ENCODE measurements at regions of chr4 and their contacts with region 1.

Region 1: GRCh38 chr4:75724066-75724866 is at the start of gene USO1:
- DNase-seq: peak; percentile 99
- H3K4me3 Mint-ChIP-seq: peak within 1 kb of the TSS; percentile 98
- H3K27ac Mint-ChIP-seq: peak within 1 kb of the TSS; percentile 99
- H3K4me1 Mint-ChIP-seq: peaks cover 55% of the 10 kb centered on the region
- H3K27me3 Mint-ChIP-seq: peaks cover 5% of the 10 kb centered on the region

Region 2: DNA sequence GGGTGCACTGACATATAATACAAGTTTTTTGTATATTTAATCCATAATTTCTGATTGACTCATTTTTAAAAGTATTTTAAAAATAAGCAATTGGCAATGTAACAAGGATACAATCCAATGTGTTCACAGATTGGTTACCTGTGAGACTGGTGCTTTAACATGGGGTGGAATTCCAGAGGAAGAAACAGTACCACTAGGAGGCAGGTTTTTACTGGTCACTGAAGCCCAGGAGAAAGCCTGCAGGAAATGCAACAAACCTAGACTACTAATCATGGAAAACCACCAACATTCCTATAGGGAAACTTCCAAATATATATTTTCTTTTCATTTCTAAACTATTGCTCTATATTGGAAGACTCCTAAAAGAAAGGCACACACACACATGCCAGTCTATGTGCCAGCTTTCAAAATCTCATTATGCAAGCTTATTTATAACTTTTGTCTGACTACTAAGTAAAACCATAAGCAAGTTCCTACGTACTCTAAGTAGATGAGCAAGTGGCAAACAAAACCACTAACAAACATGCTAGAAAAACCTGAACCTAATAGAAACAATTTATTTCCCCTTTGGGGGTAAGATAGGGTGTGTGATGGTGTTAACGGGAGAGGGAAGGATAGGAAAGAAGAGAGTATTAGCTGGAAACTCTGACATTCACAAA is 70.3 kb before region 1 on chr4:
- CTCF ChIA-PET with region 1: interaction called, 16 read pairs
- DNase-seq: no peak
- H3K4me3 Mint-ChIP-seq: peak overlapping the region; percentile 32
- H3K27ac Mint-ChIP-seq: peak overlapping the region; percentile 98
- H3K4me1 Mint-ChIP-seq: peaks cover 65% of the 10 kb centered on the region
- H3K27me3 Mint-ChIP-seq: no peaks in the 10 kb centered on the region

Region 3: GRCh38 chr4:75672461-75673026 is 51.7 kb before region 1 on chr4:
- CTCF ChIA-PET with region 1: interaction called, 13 read pairs
- DNase-seq: peak; percentile 89
- H3K4me3 Mint-ChIP-seq: peak overlapping the region; percentile 97
- H3K27ac Mint-ChIP-seq: peak overlapping the region; percentile 99
- H3K4me1 Mint-ChIP-seq: peaks cover 52% of the 10 kb centered on the region
- H3K27me3 Mint-ChIP-seq: peaks cover 12% of the 10 kb centered on the region

Region 4: DNA sequence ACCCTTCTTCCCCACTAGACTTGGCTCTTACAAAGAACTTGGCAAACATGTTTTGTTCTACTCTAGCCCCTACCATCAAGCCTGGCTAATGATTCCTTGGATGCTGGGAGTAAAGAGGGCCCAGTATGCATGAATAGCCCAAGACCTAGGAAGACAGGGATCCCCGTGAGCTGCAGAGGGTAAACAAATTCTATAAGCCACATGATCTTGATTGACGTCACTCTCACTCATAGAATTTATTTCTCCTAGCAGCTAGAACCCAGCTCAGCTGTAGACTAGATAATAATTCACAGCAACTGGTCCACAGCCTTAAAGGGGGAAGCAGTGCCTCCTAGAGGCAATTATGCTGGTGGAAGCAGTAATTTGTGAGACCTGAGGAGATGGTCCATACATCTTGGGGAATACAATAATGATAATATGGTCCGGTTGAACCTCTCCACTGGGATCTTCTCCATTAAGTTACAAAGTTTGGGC is 16.0 kb before region 1 on chr4:
- CTCF ChIA-PET with region 1: interaction called, 20 read pairs
- DNase-seq: peak; percentile 64
- H3K4me3 Mint-ChIP-seq: no peak overlapping the region
- H3K27ac Mint-ChIP-seq: peak overlapping the region; percentile 70
- H3K4me1 Mint-ChIP-seq: peaks cover 13% of the 10 kb centered on the region
- H3K27me3 Mint-ChIP-seq: no peaks in the 10 kb centered on the region

Region 5: DNA sequence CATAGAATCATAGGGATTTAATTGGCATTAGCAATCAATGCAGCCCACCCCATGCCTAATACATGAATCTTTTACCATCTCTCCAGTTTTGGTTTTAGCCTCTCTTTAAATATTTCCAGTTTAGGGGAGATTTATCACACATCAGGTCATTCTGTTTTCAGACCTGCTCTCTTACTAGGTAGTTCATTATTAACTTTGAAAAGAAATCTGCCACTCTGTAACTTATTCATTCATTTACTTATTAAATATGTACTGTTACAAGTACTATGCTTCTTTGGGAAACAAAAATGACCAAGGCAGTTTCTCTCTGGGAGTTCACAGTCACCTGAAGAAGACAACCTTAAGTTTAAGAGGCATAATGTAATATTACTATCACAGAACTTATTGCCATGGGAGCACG is 62.3 kb after region 1 on chr4:
- CTCF ChIA-PET with region 1: no interaction called
- DNase-seq: no peak
- H3K4me3 Mint-ChIP-seq: no peak overlapping the region
- H3K27ac Mint-ChIP-seq: no peak overlapping the region
- H3K4me1 Mint-ChIP-seq: no peaks in the 10 kb centered on the region
- H3K27me3 Mint-ChIP-seq: no peaks in the 10 kb centered on the region

Region 6: GRCh38 chr4:75821966-75822365 is 97.7 kb after region 1 on chr4:
- CTCF ChIA-PET with region 1: no interaction called
- DNase-seq: no peak
- H3K4me3 Mint-ChIP-seq: no peak overlapping the region
- H3K27ac Mint-ChIP-seq: no peak overlapping the region
- H3K4me1 Mint-ChIP-seq: no peaks in the 10 kb centered on the region
- H3K27me3 Mint-ChIP-seq: no peaks in the 10 kb centered on the region

Measured in activated naive CD4-positive, alpha-beta T cell treated with anti-CD3 and anti-CD28 coated beads, Interleukin-2, amount 10 ng/mL, durations not matched to agents 7 days and 5 days (primary cell).